Keratinocyte (primary cell): ENCODE measurements at regions of chr15 and their contacts with region 1.

Region 1: DNA sequence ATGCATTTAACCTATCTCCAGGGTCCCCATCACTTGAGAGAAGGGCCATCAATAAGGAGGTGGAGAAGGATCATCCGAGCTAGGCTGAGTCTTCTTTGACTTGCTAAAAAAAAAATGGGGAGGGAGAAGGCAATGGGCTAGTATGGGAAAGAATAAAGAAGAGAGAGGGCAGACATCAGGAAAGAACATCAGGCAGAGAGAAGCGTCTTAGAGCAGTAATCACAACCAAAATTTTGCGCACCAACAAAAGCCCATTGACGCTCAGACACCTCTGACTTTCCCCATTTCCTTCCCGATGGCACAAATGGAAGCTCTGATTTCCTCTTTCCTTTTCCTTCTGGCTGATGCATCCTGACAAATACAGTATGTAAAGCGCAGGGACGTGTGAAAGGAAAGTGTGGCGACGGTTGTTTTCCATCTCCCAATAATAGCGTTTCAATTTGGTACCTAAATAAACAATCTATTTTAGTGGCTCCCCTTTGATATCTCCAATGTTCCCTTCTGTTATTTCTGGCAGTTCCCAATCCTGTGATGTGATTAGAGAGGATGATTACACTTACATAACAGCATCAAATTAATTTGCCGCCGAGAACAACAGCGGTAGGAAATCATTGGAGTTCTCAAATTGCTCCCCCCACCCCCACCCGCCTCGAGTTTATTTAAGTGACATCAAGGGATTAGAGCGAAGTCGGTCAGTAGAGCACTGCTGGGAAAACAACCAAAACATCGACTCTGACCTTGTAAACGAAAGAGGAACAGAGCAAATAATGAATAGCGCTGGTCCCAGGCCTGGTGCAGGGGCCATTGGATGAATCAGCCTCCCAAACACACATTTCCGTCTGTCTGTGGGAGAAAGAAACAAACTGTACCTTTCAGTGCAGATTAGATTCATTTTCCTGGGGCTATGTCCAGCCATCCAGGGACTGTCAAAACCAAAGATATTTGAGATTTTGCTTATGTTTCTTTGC is 273.3 kb upstream of the ICE2 start:
- DNase-seq: no peak
- H3K4me3 ChIP-seq: no peak overlapping the region
- H3K27ac ChIP-seq: no peak overlapping the region
- H3K4me1 ChIP-seq: no peaks in the 10 kb centered on the region
- H3K27me3 ChIP-seq: peaks cover 4% of the 10 kb centered on the region
- CTCF ChIP-seq: no peak

Region 2: DNA sequence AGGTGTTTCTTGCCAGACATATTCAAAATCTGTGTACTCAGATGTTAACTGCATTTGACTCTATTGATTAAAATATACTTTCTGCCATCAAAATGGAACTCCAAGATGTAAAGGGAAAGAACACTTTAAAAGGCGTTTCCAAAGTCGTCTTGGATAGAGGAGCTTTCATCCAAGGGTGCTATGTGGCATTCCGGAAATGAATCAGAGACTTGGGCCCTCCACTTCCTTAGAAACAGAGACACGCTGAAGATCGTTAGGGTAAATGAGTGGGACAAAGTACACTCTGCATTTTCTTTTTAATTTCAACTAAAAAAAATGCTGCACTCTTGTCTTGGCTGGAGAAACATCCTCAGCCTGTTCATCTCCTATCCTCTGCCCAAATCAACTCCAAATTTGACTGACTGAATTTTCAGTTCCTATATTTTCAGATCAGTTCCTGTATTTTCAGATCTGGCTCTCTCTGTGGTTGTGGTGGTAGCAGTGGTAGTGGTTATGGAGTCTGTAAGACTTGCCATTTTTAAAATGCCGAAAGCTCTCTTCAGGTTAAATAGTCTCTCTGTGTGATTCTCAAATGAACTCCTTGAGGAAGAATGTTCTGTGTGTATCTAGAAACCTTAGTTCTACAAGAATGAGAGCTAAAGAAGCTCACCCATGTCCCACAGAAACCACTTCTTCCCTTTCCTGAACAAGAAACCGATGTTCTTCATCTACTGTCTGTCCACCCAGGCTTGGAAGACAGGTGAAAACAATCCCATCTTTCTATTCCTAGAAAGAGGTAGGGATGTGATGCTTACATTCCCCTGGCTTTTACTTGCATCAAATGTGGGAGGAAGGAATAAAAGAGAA is 116.5 kb before region 1 on chr15:
- dilution Hi-C with region 1: no loop called
- DNase-seq: no peak
- H3K4me3 ChIP-seq: no peak overlapping the region
- H3K27ac ChIP-seq: no peak overlapping the region
- H3K4me1 ChIP-seq: peaks cover 2% of the 10 kb centered on the region
- H3K27me3 ChIP-seq: no peaks in the 10 kb centered on the region
- CTCF ChIP-seq: no peak

Region 3: DNA sequence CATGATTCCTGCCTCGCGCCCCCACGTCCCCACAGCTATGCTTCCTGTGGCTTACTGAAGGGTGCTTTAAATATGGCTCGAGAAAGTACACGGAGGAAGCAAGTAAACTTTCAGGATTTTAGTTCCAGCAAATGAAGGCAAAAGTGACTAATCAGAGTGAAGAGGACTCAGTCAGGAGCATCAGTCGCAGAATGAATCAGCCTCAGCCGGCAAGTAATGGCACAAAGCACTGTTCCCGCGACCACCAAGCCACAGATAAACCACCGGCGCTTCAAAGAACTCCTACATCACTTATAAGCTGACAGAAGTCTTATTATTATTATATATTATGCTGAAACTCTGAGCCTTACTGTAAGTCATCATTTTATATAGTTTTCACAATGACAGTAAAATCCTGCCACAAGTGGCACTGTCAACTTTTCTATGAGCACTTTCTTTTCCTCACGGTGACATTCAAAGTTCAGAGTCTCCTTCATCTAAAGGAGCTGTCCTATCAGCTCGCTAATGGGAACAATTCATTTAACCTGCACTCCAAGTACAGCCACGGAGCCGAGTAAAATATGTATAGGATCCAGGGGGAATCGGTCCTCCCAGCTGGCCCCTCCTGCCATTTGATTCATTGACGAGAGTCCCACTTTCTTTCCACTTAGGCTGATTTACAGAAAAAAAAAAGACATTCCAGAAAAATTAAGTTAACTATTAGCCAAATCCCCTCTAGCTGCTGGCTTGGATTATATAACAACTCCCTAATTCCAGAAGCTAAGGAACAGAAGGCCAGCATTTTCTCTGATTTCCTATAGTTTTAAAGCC is 56.4 kb before region 1 on chr15:
- dilution Hi-C with region 1: loop called (anchors 10 kb)
- DNase-seq: no peak
- H3K4me3 ChIP-seq: no peak overlapping the region
- H3K27ac ChIP-seq: no peak overlapping the region
- H3K4me1 ChIP-seq: no peaks in the 10 kb centered on the region
- H3K27me3 ChIP-seq: no peaks in the 10 kb centered on the region
- CTCF ChIP-seq: no peak

Region 4: DNA sequence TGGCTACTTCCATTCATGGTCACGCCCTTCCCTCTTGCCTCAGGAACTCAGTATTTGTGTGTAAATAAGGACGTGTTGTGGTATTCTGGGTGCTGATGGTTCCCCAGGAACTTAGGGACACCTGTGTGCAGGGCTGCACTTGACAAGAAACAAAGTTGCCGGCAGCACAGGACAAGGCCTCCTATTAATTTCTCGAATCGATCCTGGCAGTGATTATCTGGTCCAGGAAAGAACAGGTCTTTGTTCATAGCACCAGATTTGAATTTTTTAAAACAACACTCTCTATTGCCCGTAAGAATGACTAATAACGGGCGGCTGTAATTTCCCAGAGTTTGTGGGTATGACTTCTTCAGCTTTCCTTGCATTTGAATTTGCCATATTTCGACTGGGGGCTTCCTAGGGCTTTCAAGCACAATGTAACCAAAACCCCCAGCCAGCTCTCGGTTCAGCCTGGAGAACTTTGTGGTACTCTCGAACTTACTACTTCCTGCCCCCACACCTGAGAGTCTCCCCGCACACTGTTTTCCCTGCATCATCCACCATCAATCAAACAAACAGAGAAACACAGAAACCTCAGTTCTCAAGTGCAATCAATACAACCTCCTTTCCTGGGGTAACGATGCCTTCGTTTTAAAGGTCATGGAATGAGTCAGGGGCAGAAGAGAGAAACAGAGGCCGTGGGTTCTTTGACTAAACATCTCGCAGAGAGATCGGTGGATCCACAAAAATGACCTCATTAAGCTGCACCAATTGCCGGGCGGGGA is 31.6 kb before region 1 on chr15:
- dilution Hi-C with region 1: no loop called
- DNase-seq: no peak
- H3K4me3 ChIP-seq: no peak overlapping the region
- H3K27ac ChIP-seq: no peak overlapping the region
- H3K4me1 ChIP-seq: no peaks in the 10 kb centered on the region
- H3K27me3 ChIP-seq: no peaks in the 10 kb centered on the region
- CTCF ChIP-seq: no peak